Activated CD4-positive, alpha-beta memory T cell treated with anti-CD3 and anti-CD28 coated beads for 36 hours (primary cell): ENCODE measurements at regions of chr20 and their contacts with region 1.

Region 1: GRCh38 chr20:48828022-48828743 is 384 bp upstream of the PREX1 start:
- DNase-seq: peak; percentile 82
- H3K4me3 Mint-ChIP-seq: peak overlapping the region; percentile 76
- H3K27ac Mint-ChIP-seq: peak overlapping the region; percentile 72
- H3K4me1 Mint-ChIP-seq: peaks cover 30% of the 10 kb centered on the region
- H3K27me3 Mint-ChIP-seq: no peaks in the 10 kb centered on the region

Region 2: GRCh38 chr20:48657475-48658470 is 170.4 kb before region 1 on chr20:
- CTCF ChIA-PET with region 1: interaction called, 21 read pairs
- POLR2A ChIA-PET with region 1: no interaction called
- intact Hi-C with region 1: no loop called
- DNase-seq: peak; percentile 74
- H3K4me3 Mint-ChIP-seq: no peak overlapping the region
- H3K27ac Mint-ChIP-seq: peak overlapping the region; percentile 57
- H3K4me1 Mint-ChIP-seq: peaks cover 1% of the 10 kb centered on the region
- H3K27me3 Mint-ChIP-seq: no peaks in the 10 kb centered on the region

Region 3: GRCh38 chr20:48738399-48739304 is 89.5 kb before region 1 on chr20:
- CTCF ChIA-PET with region 1: interaction called, 5 read pairs
- POLR2A ChIA-PET with region 1: interaction called, 29 read pairs
- intact Hi-C with region 1: loop called (anchors 1 kb)
- DNase-seq: peak; percentile 91
- H3K4me3 Mint-ChIP-seq: peak overlapping the region; percentile 38
- H3K27ac Mint-ChIP-seq: peak overlapping the region; percentile 92
- H3K4me1 Mint-ChIP-seq: peaks cover 56% of the 10 kb centered on the region
- H3K27me3 Mint-ChIP-seq: no peaks in the 10 kb centered on the region

Region 4: DNA sequence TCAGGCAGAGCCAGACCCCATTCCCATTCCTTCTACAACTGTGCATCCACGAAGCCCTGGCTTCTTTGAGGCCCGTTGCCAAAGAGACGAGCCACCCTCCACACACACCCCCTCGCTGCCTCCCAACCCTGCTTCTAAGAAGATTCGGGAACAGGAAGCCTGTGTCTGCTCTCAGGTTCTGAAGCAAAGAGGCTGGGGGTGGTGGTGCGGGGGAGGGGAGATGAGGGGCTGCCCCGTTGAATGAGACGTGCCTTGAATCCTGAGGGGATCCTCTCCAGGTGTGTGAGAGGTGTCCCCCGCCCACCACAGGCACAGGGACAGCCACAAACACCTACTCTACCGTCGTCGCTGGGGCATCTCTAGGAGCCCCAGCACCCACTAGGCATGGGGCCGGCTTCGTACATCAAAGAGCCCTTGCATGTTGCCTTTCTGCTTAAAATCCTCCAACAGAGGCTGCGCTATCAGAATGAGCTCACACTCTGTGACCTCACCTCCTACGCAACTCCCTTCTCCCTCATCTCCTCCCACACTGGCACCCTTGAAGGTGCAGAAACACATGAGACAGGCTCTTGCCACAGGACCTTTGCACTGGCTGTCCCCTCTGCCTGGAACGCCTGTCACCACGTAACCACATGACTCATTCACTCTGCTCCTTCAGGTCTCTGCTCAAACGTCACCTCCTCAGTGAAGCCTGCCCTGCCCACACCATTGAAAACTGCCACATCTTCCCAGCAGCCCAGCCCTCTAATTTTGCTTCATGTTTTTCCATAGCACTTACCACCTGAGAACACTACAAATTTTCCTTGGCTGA is 58.9 kb before region 1 on chr20:
- CTCF ChIA-PET with region 1: interaction called, 3 read pairs
- POLR2A ChIA-PET with region 1: interaction called, 4 read pairs
- intact Hi-C with region 1: loop called (anchors 1 kb)
- DNase-seq: peak; percentile 98
- H3K4me3 Mint-ChIP-seq: peak overlapping the region; percentile 59
- H3K27ac Mint-ChIP-seq: peak overlapping the region; percentile 91
- H3K4me1 Mint-ChIP-seq: peaks cover 93% of the 10 kb centered on the region
- H3K27me3 Mint-ChIP-seq: no peaks in the 10 kb centered on the region

Region 5: GRCh38 chr20:48799706-48800105 is 28.5 kb before region 1 on chr20:
- CTCF ChIA-PET with region 1: no interaction called
- POLR2A ChIA-PET with region 1: no interaction called
- intact Hi-C with region 1: no loop called
- DNase-seq: no peak
- H3K4me3 Mint-ChIP-seq: no peak overlapping the region
- H3K27ac Mint-ChIP-seq: no peak overlapping the region
- H3K4me1 Mint-ChIP-seq: peaks cover 72% of the 10 kb centered on the region
- H3K27me3 Mint-ChIP-seq: no peaks in the 10 kb centered on the region

Region 6: GRCh38 chr20:48846498-48847485 is 18.6 kb after region 1 on chr20:
- CTCF ChIA-PET with region 1: interaction called, 5 read pairs
- POLR2A ChIA-PET with region 1: interaction called, 5 read pairs
- intact Hi-C with region 1: loop called (anchors 1 kb)
- DNase-seq: peak; percentile 87
- H3K4me3 Mint-ChIP-seq: no peak overlapping the region
- H3K27ac Mint-ChIP-seq: peak overlapping the region; percentile 75
- H3K4me1 Mint-ChIP-seq: peaks cover 38% of the 10 kb centered on the region
- H3K27me3 Mint-ChIP-seq: no peaks in the 10 kb centered on the region

Region 7: DNA sequence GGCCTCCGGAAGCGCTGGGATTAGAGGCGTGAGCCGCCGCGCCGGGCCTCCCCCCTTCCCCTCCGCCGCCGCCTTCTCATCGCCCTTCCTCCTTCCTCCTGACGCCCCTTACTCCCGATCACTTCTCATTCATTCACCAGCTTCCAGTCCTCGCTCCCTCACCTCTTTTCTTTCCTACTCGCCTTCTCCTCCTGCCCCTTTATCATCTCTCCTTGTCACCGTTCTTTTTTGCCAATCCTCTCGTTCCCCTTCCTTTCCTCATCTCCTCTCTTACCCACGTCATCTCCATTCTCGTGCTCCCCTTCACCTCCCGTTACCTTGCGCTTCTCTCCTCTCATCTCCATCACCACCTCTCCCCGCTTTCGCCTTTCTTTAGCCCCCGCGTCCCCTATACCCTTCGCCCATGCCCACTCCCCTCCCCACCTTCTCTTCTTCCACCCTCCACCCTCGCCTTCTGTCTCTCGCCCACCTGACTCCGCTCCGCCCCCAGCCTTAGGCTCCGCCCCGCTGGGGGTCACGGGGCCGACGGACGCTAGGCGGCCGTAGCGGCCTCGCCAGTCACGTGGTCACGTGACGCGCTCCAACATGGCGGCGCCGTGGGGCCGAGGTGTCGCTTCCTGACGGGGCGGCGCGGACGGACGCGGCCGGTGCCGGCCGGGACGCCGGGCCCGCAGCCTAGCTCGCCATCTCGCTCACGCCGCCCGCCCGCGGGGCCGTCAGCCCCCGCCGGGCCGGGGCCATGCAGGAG is 93.1 kb after region 1 on chr20 and contains the start of gene ARFGEF2:
- CTCF ChIA-PET with region 1: no interaction called
- POLR2A ChIA-PET with region 1: interaction called, 3 read pairs
- intact Hi-C with region 1: loop called (anchors 5 kb)
- DNase-seq: peak; percentile 96
- H3K4me3 Mint-ChIP-seq: peak within 1 kb of the TSS; percentile 91
- H3K27ac Mint-ChIP-seq: peak within 1 kb of the TSS; percentile 90
- H3K4me1 Mint-ChIP-seq: peaks cover 47% of the 10 kb centered on the region
- H3K27me3 Mint-ChIP-seq: no peaks in the 10 kb centered on the region
- total RNA-seq, gene ARFGEF2: 21.9 to 22.1 TPM